ENCODE measurements at regions of chr4 and their contacts with region 1.

Region 1: DNA sequence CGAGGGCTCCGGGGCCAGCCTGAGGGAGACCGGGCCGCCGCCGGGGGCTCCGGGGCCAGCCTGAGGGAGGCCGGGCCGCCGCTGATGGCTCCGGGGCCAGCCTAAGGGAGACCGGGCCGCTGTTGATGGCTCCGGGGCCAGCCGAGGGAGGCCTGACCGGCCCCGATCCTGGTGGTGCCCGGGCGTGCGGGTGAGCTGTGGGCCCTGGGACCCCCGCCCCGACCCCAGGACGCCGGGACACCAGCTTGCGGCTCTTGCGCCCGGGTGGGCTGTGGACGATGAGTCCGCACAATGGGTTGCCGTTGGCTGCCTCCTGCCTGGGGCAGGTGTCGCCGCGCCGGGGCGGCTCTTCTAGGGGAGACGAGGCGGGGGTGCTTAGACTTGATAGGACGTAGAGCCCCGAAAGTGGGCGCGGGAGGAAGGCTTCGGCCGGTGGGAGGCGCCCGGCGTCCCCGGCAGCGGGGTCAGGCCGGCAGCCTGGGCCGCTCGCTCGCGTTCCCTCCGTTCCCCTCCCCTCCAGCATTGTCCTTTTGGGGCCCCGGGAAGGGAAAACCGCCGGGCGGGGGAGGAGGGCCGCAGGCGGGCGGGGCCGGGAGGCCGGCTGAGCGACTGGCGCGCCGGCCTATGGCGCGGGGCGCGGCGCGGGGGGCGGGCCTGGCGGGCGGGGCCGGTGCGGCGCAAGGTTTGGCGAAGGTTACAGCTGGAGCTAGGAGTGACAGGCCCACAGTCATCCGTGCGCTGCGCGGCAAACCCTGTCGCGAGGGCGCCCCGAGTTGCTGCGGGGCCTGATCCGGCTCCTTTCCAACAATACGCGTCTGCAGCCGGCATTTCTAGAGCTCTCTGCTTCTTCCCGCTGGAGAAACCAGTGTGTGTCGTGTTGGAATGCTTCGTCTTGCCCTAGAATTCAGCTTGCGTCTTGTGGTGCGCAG is 790 bp downstream of the KIAA0232 start:
- DNase-seq: peak; percentile 87
- H3K4me3 ChIP-seq: peak overlapping the region; percentile 95
- H3K27ac ChIP-seq: peak overlapping the region; percentile 87
- H3K4me1 ChIP-seq: peaks cover 18% of the 10 kb centered on the region
- CTCF ChIP-seq: peak; percentile 51; the same call in 1 of the 2 replicates

Region 2: GRCh38 chr4:6640292-6641163 is 142.8 kb before region 1 on chr4 and contains the start of gene MRFAP1:
- CTCF ChIA-PET with region 1: no interaction called
- POLR2A ChIA-PET with region 1: no interaction called
- intact Hi-C with region 1: loop called (anchors 2 kb)
- DNase-seq: peak; percentile 96
- H3K4me3 ChIP-seq: peak within 1 kb of the TSS; percentile 87
- H3K27ac ChIP-seq: peak within 1 kb of the TSS; percentile 83
- H3K4me1 ChIP-seq: peaks cover 19% of the 10 kb centered on the region
- CTCF ChIP-seq: no peak
- total RNA-seq, gene MRFAP1: 90.8 and 142 TPM in 2 replicates

Region 3: GRCh38 chr4:6829086-6829485 is 45.8 kb after region 1 on chr4:
- CTCF ChIA-PET with region 1: no interaction called
- POLR2A ChIA-PET with region 1: no interaction called
- intact Hi-C with region 1: no loop called
- DNase-seq: no peak
- H3K4me3 ChIP-seq: no peak overlapping the region
- H3K27ac ChIP-seq: no peak overlapping the region
- H3K4me1 ChIP-seq: no peaks in the 10 kb centered on the region
- CTCF ChIP-seq: no peak

Region 4: GRCh38 chr4:6873792-6874461 is 90.6 kb after region 1 on chr4:
- CTCF ChIA-PET with region 1: interaction called, 3 read pairs
- POLR2A ChIA-PET with region 1: no interaction called
- intact Hi-C with region 1: loop called (anchors 1 kb)
- DNase-seq: peak; percentile 79
- H3K4me3 ChIP-seq: no peak overlapping the region
- H3K27ac ChIP-seq: no peak overlapping the region
- H3K4me1 ChIP-seq: no peaks in the 10 kb centered on the region
- CTCF ChIP-seq: peak; percentile 93

Region 5: DNA sequence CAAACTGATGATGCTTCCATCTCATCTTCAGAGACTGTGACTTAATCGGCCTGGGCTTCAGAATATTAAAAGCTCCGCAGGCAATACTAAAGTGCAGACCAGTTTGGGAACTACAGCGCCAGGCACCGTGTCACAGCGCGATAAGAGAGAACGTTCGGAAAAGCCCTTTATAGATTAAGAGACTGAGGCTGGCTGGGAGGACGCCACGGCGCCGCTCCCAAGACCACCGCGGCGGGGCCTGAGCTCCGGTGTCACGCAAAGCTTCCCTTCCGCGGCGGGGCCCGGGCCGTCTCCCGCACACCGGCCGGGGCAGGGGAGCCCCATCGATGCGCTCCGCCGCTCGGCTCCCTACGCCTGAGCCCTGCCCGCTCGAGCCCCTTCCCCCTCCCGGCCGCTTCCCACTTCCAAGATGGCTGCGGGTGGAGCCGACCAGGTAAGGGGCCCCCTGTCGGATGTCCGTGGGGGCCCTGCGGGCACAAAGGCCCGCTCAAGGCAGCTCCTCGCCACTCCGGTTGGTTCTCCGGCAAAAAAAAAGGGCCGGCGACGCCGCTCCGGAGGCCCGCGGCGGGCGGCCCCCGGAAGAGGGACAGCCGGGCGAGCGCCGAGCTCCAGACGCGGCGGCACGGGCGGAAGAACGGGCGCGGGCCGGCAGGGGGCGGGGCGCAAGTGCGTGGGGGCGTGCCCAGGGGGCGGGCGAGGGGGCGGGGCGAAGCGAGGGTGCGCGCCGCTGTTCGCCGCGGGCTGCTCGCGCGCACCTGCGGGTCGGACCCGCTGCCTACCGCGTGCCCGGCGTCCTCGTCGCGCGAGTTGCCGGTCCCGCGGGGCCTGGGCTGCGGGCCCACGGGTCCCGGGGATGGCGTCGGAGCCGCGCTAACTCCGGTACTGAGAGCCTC is 126.0 kb after region 1 on chr4 and contains the start of gene TBC1D14:
- CTCF ChIA-PET with region 1: no interaction called
- POLR2A ChIA-PET with region 1: no interaction called
- intact Hi-C with region 1: loop called (anchors 1 kb)
- DNase-seq: peak; percentile 89
- H3K4me3 ChIP-seq: peak within 1 kb of the TSS; percentile 73
- H3K27ac ChIP-seq: peak within 1 kb of the TSS; percentile 77
- H3K4me1 ChIP-seq: peaks cover 39% of the 10 kb centered on the region
- CTCF ChIP-seq: peak; percentile 37; the same call in 1 of the 2 replicates
- total RNA-seq, gene TBC1D14: 35.6 and 38.4 TPM in 2 replicates

Region 6: DNA sequence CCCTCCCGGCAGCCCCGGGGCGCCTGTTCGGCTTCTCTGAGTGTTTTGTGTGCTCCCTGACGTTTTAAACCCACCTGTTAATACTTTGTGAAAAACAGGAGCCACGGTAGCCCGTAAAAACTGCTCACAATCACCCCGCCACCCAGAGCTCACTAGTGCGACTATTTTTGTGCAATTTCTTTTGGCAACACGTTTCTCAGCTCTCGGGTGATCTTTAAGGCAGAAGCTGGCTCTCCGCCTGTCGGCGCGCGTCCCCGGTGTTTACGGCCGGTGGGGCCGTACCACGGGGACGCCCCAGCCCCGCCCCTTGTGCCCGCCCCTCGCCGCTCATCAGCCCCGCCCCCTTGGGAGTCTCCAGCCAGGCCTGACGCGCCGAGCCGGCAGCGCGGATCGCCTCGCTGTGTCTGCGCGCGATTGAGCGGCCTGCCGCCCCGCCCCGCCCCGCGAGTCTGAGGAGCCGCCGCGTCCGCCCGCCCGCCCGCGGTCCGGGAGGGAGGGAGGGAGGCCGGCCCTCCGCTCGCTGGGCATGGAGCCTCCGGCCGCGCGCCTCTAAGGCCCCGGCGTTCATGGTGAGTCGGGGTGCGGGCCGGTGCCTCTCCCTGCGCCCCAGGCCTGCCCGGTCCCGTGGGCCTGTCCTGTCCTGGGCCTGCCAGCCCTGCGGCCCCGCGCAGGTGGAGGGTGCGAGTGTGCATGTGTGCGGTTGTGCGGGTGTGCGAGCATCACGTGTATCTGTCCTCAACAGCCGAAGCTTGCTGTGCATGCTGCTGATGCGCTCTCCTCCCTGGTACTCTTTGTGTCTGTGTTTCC is 203.7 kb after region 1 on chr4:
- CTCF ChIA-PET with region 1: no interaction called
- POLR2A ChIA-PET with region 1: no interaction called
- intact Hi-C with region 1: loop called (anchors 2 kb)
- DNase-seq: peak; percentile 96
- H3K4me3 ChIP-seq: peak overlapping the region; percentile 78
- H3K27ac ChIP-seq: peak overlapping the region; percentile 62
- H3K4me1 ChIP-seq: peaks cover 38% of the 10 kb centered on the region
- CTCF ChIP-seq: no peak; the same call in 1 of the 2 replicates

Measured in OCI-LY7 (cell line).